Right ventricle myocardium inferior (tissue), 1 donor: ENCODE measurements at regions of chr4 and their contacts with region 1.

Region 1: GRCh38 chr4:41538017-41538733 is at the start of gene LIMCH1:
- DNase-seq: peak; percentile 84
- ATAC-seq: peak; percentile 89
- total RNA-seq, gene LIMCH1: 294 TPM

Region 2: GRCh38 chr4:41281038-41281634 is 257.0 kb before region 1 on chr4:
- intact Hi-C with region 1: loop called (anchors 10 kb)
- DNase-seq: no peak
- ATAC-seq: peak; percentile 93

Region 3: GRCh38 chr4:41427306-41427882 is 110.8 kb before region 1 on chr4:
- intact Hi-C with region 1: loop called (anchors 5 kb)
- DNase-seq: peak; percentile 22
- ATAC-seq: no peak

Region 4: GRCh38 chr4:41569961-41570360 is 31.8 kb after region 1 on chr4:
- intact Hi-C with region 1: loop called (anchors 2 kb)
- DNase-seq: no peak
- ATAC-seq: peak; percentile 93

Region 5: GRCh38 chr4:41611881-41612871 is 74.0 kb after region 1 on chr4:
- intact Hi-C with region 1: loop called (anchors 5 kb)
- DNase-seq: peak; percentile 72
- ATAC-seq: peak; percentile 90

Region 6: GRCh38 chr4:41644288-41644914 is 106.2 kb after region 1 on chr4:
- intact Hi-C with region 1: loop called (anchors 5 kb)
- DNase-seq: peak; percentile 83
- ATAC-seq: peak; percentile 88

Region 7: DNA sequence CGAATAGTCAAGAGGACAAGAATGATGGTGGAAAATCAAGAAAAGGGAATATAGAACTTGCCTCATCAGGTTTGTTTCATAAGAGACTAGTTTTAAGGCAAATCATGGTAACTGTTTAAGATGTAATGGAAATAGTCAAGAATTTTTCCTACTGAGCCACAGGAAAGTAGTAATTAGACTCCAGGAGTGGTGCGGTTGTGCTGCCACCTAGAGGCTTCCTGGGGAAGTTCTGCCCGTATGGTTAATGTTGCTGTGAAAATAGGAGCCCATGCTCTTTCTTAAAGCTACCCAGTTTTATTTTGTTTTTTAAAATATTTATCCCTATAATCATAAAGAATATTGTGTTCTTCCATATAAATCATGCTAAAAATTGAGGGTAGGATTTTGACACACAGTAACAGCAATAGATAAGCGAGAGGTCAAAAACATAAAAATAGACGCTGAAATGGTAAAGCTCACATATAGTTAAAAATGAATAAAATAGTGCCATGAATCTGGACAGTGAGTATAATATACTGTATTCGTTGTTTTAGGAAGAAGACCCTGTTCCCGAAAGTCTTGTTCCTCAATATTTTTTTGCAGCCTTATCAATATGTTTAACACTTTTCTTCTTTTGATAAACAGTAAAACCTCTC is 123.4 kb after region 1 on chr4:
- intact Hi-C with region 1: loop called (anchors 5 kb)
- DNase-seq: no peak
- ATAC-seq: peak; percentile 56